ENCODE measurements at regions of chr2 and their contacts with region 1.

Region 1: DNA sequence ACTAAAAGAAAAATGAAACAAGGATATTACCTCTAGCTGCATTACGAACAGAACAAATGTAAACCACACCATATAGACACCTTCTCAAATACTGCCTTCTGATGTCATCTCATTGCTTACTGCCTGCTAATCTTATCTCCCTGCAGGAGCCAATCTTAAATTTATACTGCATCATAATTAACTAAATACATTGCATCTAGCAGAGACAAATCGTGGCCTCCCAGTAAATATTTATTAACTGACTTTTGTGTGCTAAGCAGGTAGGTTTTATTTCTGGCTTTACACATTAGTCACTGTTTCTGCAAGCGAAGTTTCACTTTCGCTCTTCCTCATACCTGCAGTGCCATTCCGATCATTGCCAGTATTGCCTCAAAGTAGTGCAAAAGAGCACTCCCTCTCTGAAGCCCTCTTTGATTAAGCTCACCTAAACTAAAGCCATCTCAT is 67.5 kb downstream of the SPATS2L start:
- DNase-seq: peak; percentile 33
- H3K4me3 Mint-ChIP-seq: peak overlapping the region; percentile 76
- H3K27ac Mint-ChIP-seq: peak overlapping the region; percentile 74
- H3K4me1 Mint-ChIP-seq: peaks cover 51% of the 10 kb centered on the region
- H3K27me3 Mint-ChIP-seq: no peaks in the 10 kb centered on the region

Region 2: GRCh38 chr2:200338701-200339100 is 35.3 kb before region 1 on chr2:
- intact Hi-C with region 1: loop called (anchors 5 kb)
- DNase-seq: no peak
- H3K4me3 Mint-ChIP-seq: no peak overlapping the region
- H3K27ac Mint-ChIP-seq: no peak overlapping the region
- H3K4me1 Mint-ChIP-seq: peaks cover 23% of the 10 kb centered on the region
- H3K27me3 Mint-ChIP-seq: no peaks in the 10 kb centered on the region

Region 3: DNA sequence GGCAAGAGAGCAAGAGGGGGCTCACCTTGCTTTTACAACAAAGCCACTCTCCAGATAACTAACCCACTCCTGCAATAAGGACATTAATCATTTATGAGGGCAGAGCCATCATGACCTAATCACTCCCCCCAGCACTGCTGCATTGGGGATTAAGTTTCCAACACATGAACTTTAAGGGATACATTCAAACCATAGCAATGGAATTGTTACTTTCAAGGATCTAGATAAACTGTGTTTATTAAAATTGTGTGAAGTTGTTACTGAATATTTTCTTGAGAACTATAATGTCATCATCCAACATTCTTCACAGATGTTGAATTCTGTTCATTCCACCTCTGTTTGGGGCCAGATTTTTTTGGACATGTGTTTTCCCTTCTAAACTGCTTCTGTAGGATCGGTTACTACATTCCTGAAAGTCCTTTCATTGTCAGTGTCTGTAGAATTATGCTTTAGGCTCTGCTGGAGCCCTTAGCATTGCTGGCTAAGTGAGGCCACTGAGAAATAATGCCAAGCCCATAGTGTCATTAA is 17.1 kb before region 1 on chr2:
- intact Hi-C with region 1: no loop called
- DNase-seq: no peak
- H3K4me3 Mint-ChIP-seq: no peak overlapping the region
- H3K27ac Mint-ChIP-seq: no peak overlapping the region
- H3K4me1 Mint-ChIP-seq: peaks cover 8% of the 10 kb centered on the region
- H3K27me3 Mint-ChIP-seq: no peaks in the 10 kb centered on the region

Region 4: DNA sequence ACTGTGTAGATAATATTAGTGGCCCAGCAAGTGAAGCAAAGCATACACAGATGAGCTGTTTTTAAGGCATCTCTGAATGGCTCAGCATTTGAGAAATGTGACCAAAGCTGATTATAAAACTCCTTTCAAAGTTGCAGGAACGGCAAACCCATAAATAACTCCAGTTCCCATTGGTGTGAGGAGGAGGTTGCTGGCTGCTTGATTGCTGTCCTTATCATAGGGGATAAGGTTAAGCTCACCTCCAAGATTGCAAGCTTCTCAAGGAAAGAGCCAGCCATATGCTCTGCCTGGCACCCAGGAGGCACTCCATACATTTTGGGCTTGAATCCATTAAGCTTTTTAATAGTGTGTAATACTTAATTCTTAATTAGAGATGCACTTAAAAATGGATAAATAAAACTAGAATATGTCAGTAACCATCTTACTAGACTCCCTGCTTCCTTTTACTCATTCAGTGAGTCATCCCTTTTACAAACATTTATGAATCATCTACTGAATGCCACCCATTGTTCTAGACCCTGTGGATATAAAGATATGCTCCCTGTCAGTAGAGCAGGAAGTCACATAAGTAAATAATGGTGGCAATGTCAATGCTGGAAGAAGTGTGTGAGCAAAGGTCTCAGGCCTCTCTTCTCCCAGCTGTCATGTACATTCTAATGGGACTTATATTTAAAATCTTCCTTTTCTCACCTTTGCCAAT is 31.8 kb after region 1 on chr2:
- intact Hi-C with region 1: loop called (anchors 1 kb)
- DNase-seq: no peak
- H3K4me3 Mint-ChIP-seq: no peak overlapping the region
- H3K27ac Mint-ChIP-seq: peak overlapping the region; percentile 67
- H3K4me1 Mint-ChIP-seq: peaks cover 50% of the 10 kb centered on the region
- H3K27me3 Mint-ChIP-seq: no peaks in the 10 kb centered on the region

Region 5: DNA sequence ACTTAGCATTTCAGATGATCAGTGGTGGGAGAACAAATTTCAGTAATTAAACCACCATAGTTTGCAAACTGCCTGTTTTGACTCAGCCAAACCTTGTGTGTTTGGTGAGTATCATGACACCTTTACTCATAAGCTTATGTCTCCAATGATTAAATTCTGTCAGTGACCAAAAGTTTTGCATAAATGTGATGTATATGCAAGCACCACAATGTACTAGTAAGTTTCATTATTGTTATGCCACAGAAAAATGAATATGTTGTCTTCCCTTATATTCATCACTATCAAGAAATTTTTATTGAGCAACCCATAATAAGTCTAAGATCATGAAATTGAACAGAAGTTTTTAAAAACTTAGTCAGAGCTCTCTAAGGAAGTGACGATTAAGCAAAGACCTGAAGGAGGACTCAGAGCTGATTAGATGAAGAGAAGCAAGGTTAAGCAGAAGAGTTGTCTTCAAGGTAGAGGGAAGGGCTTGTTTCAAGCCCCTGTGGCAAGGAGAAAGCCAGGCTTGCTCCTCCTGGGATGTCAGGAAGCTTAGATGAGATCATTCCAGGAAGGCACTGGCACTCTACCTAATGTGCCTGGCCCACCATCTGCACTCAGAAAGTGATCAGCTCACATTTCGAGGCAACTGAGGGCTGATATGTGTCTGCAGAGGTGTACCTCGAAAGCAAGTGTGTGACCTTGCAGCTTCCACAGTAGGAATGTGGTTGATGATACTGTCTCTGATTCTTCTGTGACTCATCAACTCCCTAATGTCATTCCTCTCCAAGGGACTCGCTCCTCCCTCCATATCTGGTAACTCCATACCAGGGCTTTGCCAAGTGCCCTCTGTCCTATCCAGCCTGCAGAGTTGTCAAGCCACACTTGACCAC is 81.2 kb after region 1 on chr2:
- intact Hi-C with region 1: loop called (anchors 2 kb)
- DNase-seq: no peak
- H3K4me3 Mint-ChIP-seq: no peak overlapping the region
- H3K27ac Mint-ChIP-seq: peak overlapping the region; percentile 61
- H3K4me1 Mint-ChIP-seq: peaks cover 33% of the 10 kb centered on the region
- H3K27me3 Mint-ChIP-seq: no peaks in the 10 kb centered on the region

Region 6: DNA sequence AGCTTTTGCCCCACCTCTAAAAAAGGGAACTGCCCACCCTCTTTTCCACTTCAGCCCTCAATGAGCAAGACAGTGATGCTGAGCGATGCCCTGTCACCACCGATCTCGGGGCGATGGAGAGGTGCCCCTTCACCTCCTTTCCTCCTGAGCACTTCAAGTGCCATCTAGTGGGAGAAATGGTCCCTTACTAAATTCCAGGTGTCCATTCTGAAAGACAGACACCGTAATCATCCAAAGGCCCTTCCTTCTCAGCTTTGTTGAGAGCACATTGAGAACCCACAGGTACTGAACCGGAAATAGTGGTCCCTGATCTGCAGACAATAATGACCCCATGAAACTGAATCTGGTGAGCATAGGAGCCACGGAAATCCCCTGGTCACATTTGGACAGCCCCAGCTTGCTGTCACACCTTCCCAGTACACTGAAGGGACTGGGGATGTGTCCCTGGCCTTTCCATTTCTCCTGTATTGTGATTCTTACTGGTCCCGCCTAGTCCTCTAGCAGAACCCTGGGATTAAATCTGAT is 97.4 kb after region 1 on chr2:
- intact Hi-C with region 1: loop called (anchors 5 kb)
- DNase-seq: no peak
- H3K4me3 Mint-ChIP-seq: no peak overlapping the region
- H3K27ac Mint-ChIP-seq: peak overlapping the region; percentile 75
- H3K4me1 Mint-ChIP-seq: peaks cover 32% of the 10 kb centered on the region
- H3K27me3 Mint-ChIP-seq: no peaks in the 10 kb centered on the region

Measured in activated T-helper 2 cell treated with anti-CD3 and anti-CD28 coated beads, Interferon-gamma antibody, Interleukin-2, Interleukin-4, amounts not matched to agents 10 μg/mL and 5 μg/mL and 100 μg/mL, durations not matched to agents 14 hours and 24 hours and 36 hours (primary cell).